ENCODE measurements at regions of chr2 and their contacts with region 1.

Region 1: DNA sequence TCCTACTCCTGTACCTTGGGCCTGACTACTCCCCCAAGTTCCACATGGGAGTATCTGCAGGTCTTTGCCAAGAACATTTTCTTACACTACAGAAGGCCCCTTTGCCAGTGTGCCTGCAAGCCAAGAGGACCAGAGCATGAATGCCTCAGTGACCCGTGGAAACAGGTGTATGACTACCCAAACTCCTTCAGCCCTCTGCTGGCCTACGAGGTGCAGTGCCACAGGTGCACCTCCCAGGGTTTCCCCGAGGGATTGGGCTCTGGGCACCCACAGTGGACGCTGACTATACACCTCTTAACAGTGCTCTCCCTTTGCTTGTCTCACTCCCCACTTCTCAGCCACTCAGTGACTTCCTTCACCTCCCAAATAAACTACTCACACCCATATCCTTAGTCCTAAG is 91.4 kb downstream of the COL6A3 start:
- DNase-seq: no peak
- H3K4me3 ChIP-seq: no peak overlapping the region
- H3K27ac ChIP-seq: no peak overlapping the region
- H3K4me1 ChIP-seq: no peaks in the 10 kb centered on the region
- H3K27me3 ChIP-seq: peaks cover 4 to 7% of the 10 kb centered on the region in 2 experiments
- CTCF ChIP-seq: peak in 1 of 2 donors; percentile 42
- POLR2A ChIP-seq: no peak

Region 2: DNA sequence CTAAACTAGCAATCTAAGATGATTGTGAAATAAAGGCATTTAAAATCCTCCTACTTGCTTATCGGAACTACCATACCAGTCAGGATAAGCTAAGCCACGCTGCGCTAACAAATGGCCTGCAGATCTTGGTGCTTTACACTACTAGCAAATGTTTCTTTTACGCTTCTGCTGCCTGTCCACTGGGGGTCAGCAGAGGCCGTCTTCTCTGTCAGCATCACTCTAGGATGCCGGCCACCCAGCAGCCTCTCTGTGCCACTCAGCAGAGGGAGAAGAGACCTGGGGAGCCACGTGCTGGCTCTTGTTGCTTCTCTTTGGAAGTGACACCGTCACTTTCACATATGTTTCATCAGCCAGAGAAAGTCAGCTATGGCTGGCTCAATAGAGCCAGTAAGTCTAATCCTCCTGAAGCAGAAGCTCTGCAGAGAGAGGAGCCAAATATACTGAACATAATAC is 200.3 kb before region 1 on chr2:
- CTCF ChIA-PET with region 1: no interaction called
- POLR2A ChIA-PET with region 1: no interaction called
- dilution Hi-C with region 1: no loop called
- intact Hi-C with region 1: loop called (anchors 1 kb)
- DNase-seq: peak; percentile 64
- H3K4me3 ChIP-seq: no peak overlapping the region
- H3K27ac ChIP-seq: no peak overlapping the region
- H3K4me1 ChIP-seq: peaks cover 3% of the 10 kb centered on the region
- H3K27me3 ChIP-seq: no peaks in the 10 kb centered on the region
- CTCF ChIP-seq: peak; percentile 64 to 73
- POLR2A ChIP-seq: no peak